ENCODE measurements at regions of chr20 and their contacts with region 1.

Region 1: DNA sequence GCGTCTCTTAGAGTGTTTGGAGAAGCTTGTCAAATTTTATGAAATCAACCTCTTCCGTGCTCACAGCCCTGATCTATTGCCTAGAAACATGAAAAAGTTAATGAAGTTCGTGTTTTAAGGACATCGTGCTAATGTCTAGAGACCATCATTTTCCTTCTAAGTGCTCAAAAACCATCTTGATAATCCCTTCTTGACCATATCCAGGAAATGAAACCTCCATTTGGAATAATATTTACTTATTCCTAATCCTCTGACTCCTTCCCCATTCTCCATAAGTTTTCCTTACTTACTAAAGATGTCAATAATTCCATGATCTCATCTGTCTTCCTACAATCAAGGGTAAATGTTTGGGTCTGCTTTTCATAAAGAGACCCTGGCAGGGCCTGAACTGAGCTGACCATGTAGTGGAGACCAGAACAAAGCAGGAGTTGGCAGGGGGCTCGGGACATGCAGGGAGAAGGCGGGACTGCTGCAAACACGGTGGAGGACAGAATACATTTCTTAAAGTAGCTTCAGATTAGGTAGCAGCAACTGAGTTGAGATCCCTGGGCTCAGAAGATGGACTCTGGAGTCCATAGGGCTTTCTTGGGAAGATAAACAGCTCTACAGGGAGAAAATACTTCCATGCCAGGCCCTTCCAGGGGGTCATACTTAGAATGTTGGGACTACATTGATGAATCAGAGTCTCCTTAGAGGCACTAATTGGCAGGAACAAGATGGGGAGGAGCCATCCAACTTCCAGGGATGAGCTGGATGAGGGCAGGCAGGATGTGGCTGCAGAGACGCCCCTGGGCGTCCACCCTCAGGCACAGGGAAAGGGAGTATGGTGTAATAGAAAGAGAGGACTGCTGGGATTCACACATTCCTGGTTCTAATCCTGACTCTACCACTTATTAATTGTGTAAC is 100.7 kb downstream of the RIN2 start:
- DNase-seq: no peak
- ATAC-seq: no peak
- H3K4me3 ChIP-seq: no peak overlapping the region
- H3K27ac ChIP-seq: no peak overlapping the region
- H3K4me1 ChIP-seq: no peaks in the 10 kb centered on the region
- H3K27me3 ChIP-seq: no peaks in the 10 kb centered on the region
- CTCF ChIP-seq: no peak
- EP300 ChIP-seq: no peak
- POLR2A ChIP-seq: no peak
- RAD21 ChIP-seq: no peak

Region 2: DNA sequence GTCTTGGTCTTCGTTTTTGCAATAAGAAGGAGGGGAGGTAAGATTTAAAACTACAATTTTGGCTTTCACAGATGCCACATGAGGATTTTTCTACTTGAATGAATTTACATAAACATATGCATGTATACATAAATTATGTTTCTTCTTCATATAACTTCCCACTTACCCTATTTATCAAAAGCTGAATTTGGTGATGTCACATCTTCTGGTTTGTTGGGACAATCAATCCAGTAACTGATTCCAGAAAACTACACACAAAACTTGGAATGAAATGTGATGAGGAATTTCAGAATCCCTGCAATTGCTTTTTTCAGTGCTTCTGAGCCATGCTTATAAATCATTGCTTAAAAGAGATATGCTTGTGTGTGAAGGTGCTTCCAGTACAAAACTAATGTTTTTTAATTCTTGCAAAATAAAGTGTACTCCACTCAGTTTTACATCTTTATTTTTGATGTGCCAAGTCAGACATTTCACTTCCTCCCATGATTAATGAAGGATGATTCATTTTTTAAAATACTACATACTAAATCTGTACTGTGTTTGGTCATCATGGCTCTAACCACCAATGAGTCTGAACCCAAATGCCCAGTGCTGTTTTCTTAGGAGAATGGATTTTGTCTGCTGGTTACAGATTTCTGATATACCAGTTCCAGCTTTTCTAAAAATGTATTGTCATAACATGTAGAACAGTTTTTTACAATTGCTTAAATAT is 132.7 kb before region 1 on chr20:
- CTCF ChIA-PET with region 1: no interaction called
- POLR2A ChIA-PET with region 1: no interaction called
- RAD21 ChIA-PET with region 1: no interaction called
- SMC1A ChIA-PET with region 1: no interaction called
- in situ Hi-C with region 1: no loop called
- intact Hi-C with region 1: no loop called
- DNase-seq: no peak
- ATAC-seq: no peak; the same call in 2 of the 3 replicates
- H3K4me3 ChIP-seq: no peak overlapping the region
- H3K27ac ChIP-seq: no peak overlapping the region
- H3K4me1 ChIP-seq: no peaks in the 10 kb centered on the region; the same call in 1 of the 2 replicates
- H3K27me3 ChIP-seq: no peaks in the 10 kb centered on the region
- CTCF ChIP-seq: no peak
- EP300 ChIP-seq: no peak
- POLR2A ChIP-seq: no peak
- RAD21 ChIP-seq: no peak

Region 3: DNA sequence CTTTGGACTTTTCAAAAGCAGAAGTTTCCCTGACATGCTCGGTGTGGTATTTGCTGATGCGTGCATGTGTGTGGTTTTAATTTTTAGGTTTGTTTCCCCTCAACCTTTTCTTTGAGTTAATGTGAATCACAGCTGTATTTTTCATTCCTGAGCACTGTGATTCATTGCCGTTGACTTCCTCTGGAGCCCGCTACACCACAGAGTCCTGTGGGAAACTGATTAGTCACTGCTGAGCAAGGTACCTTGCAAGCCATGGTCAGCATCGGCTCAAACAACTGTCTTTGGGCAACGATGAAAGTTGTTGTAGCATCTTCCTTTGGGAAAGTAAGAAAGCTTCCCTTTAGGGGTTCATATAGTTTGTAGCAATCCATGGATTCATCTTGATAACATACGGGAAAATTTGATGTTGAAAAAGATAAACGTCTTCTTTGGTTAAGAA is 43.1 kb before region 1 on chr20:
- CTCF ChIA-PET with region 1: interaction called, 3 read pairs
- POLR2A ChIA-PET with region 1: interaction called, 3 read pairs
- RAD21 ChIA-PET with region 1: no interaction called
- SMC1A ChIA-PET with region 1: interaction called, 4 read pairs
- in situ Hi-C with region 1: no loop called
- intact Hi-C with region 1: loop called (anchors 2 kb)
- DNase-seq: no peak
- ATAC-seq: peak; percentile 87
- H3K4me3 ChIP-seq: no peak overlapping the region
- H3K27ac ChIP-seq: no peak overlapping the region
- H3K4me1 ChIP-seq: no peaks in the 10 kb centered on the region
- H3K27me3 ChIP-seq: peaks cover 0 to 2% of the 10 kb centered on the region in 2 experiments; a peak in 1 of 4 replicates
- CTCF ChIP-seq: no peak
- EP300 ChIP-seq: no peak
- POLR2A ChIP-seq: no peak
- RAD21 ChIP-seq: no peak